IMR-90 (cell line): ENCODE measurements at regions of chr1 and their contacts with region 1.

Region 1: DNA sequence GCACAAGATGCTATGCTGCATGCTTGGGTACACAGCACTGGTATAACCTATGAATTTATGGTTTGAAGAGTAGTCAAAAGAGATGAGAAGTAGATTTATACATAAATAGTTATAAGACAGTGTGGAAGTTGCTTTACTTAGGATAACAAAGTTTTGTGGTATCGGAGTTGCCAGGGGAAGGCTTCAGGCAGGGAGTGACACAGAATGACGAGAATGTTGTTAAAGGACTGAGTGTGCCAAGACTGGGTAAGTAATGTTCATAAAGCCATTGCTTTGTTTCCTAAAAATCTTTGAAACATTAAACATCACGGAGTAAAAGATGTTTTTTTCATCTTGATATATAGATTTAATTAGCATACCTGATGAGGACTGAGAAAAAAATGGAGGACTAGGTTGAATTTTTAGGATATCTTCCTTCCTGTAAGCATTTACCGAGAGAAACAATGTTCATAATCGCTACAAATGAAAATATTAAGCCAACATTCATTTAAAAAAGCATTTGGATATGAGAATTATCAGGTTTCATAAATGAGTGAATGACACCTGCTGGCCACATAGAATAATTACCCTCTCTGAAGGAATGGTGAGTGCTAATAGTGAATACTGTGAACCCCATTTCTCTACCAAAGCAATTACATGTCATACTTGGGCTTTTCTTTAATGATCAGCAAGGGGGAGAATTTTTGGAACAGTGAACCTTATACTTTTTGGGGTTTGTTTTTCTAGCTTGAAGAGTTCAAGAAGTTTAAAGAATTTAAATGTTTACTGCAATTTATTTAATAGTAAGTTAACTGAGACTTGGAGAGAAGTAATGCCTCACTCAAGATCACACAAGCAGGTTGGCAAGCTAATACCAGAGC is 28.4 kb downstream of the EXTL2 start:
- DNase-seq: peak; percentile 70
- ATAC-seq: peak; percentile 56
- H3K4me3 ChIP-seq: no peak overlapping the region
- H3K27ac ChIP-seq: peak overlapping the region; percentile 81
- H3K4me1 ChIP-seq: peaks cover 12% of the 10 kb centered on the region
- H3K27me3 ChIP-seq: no peaks in the 10 kb centered on the region
- CTCF ChIP-seq: peak; percentile 65
- POLR2A ChIP-seq: no peak
- RAD21 ChIP-seq: peak; percentile 72

Region 2: DNA sequence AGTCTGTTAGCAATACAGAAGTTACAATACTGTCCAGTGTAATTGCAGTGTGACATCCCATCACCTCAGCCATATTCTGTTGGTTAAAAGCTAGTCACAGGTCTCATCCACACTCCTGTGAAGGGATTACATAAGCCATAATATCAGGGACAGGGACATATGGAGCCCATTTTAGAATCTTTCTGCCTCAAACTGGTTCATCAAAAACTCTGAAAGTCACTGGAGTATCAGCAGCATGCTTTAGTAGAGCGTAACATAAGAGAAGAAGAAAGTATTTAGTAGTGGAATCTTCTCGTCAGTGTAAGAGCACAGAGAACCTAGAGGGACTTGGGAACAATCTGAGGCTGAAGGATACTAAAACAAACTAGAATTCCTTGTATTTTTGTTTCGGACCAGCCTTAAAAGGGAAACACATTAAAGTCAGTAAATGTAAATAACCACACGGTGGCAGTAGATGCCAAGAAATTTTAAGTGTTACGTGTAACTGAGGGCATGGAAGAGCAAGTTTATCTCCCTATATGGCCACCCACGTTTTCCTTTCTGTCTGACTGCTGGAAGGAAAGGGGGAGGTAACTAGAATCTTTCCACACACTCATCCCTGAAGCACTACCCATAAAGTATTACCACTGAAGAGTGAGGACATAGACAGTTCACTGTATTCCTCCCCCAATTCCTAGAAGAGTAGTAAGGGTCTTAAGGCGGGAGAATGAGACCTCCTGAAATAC is 1057.7 kb before region 1 on chr1:
- CTCF ChIA-PET with region 1: no interaction called
- POLR2A ChIA-PET with region 1: no interaction called
- dilution Hi-C with region 1: no loop called
- in situ Hi-C with region 1: loop called (anchors 10 kb)
- intact Hi-C with region 1: loop called (anchors 2 kb)
- DNase-seq: peak; percentile 96
- ATAC-seq: peak; percentile 97
- H3K4me3 ChIP-seq: peak overlapping the region; percentile 7; the same call in 1 of the 2 replicates
- H3K27ac ChIP-seq: no peak overlapping the region
- H3K4me1 ChIP-seq: no peaks in the 10 kb centered on the region; the same call in 1 of the 2 replicates
- H3K27me3 ChIP-seq: peaks cover 18% of the 10 kb centered on the region
- CTCF ChIP-seq: peak; percentile 84
- POLR2A ChIP-seq: no peak
- RAD21 ChIP-seq: peak; percentile 88

Region 3: DNA sequence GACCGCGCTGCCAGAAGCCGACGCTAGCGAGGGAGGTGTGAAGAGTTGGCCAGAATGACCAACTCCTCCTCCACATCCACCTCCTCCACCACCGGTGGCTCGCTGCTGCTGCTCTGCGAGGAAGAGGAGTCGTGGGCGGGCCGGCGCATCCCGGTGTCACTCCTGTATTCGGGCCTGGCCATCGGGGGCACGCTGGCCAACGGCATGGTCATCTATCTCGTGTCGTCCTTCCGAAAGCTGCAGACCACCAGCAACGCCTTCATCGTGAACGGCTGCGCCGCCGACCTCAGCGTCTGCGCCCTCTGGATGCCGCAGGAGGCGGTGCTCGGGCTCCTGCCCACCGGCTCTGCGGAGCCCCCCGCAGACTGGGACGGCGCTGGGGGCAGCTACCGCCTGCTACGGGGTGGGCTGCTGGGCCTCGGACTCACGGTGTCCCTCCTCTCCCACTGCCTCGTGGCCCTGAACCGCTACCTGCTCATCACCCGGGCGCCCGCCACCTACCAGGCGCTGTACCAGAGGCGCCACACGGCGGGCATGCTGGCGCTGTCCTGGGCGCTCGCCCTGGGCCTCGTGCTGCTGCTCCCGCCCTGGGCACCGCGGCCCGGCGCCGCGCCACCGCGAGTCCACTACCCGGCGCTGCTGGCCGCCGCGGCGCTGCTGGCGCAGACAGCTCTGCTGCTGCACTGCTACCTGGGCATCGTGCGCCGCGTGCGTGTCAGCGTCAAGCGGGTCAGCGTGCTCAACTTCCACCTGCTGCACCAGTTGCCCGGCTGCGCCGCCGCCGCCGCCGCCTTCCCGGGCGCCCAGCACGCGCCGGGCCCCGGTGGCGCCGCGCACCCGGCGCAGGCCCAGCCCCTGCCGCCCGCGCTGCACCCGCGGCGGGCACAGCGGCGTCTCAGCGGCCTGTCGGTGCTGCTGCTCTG is 327.1 kb before region 1 on chr1:
- CTCF ChIA-PET with region 1: interaction called, 3 read pairs
- POLR2A ChIA-PET with region 1: no interaction called
- dilution Hi-C with region 1: no loop called
- in situ Hi-C with region 1: no loop called
- intact Hi-C with region 1: loop called (anchors 5 kb)
- DNase-seq: peak; percentile 3
- ATAC-seq: peak; percentile 79
- H3K4me3 ChIP-seq: peak overlapping the region; percentile 30
- H3K27ac ChIP-seq: no peak overlapping the region
- H3K4me1 ChIP-seq: peaks cover 4% of the 10 kb centered on the region; the same call in 1 of the 2 replicates
- H3K27me3 ChIP-seq: peaks cover 54% of the 10 kb centered on the region
- CTCF ChIP-seq: no peak; the same call in 1 of the 2 replicates
- POLR2A ChIP-seq: no peak
- RAD21 ChIP-seq: no peak

Region 4: GRCh38 chr1:100622037-100622436 is 244.2 kb before region 1 on chr1:
- CTCF ChIA-PET with region 1: interaction called, 3 read pairs
- POLR2A ChIA-PET with region 1: no interaction called
- dilution Hi-C with region 1: no loop called
- in situ Hi-C with region 1: no loop called
- intact Hi-C with region 1: loop called (anchors 5 kb)
- DNase-seq: peak; percentile 99
- ATAC-seq: peak; percentile 73
- H3K4me3 ChIP-seq: no peak overlapping the region
- H3K27ac ChIP-seq: peak overlapping the region; percentile 93; the same call in 1 of the 2 replicates
- H3K4me1 ChIP-seq: peaks cover 21% of the 10 kb centered on the region
- H3K27me3 ChIP-seq: no peaks in the 10 kb centered on the region
- CTCF ChIP-seq: no peak
- POLR2A ChIP-seq: no peak
- RAD21 ChIP-seq: peak; percentile 20

Region 5: DNA sequence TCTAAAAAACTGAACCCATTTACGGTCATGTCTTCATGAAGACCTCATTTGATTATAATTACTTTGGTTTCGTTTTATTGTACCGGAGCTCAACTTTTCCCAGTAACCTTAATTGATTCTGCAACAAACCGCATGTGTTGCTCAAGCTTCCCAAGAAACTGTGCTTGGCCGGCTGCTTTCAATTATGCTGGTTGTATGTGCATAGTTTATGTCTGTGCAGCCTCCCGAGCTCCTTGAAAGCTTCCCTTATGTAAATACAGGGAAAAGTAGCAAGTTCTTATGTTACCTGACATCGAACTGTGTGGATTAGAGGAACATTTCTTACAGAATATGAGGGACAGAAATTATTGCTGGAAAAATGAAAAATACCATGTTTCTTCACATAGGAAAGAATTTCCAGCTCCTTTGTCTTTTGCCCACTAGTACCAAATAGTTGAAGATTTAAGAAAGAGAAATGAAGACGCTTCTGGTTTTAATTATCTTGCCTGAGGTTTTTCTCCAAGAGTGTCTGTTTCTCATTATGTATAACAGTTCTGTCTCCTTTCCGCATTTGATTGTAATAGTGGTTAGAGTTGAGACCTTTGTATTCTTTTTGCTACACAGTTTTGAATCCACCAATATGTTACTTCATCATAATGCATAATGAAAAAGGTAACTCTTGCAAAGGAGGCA is 144.6 kb before region 1 on chr1:
- CTCF ChIA-PET with region 1: no interaction called
- POLR2A ChIA-PET with region 1: no interaction called
- dilution Hi-C with region 1: no loop called
- in situ Hi-C with region 1: no loop called
- intact Hi-C with region 1: loop called (anchors 1 kb)
- DNase-seq: peak; percentile 96
- ATAC-seq: peak; percentile 78
- H3K4me3 ChIP-seq: peak overlapping the region; percentile 51
- H3K27ac ChIP-seq: peak overlapping the region; percentile 96; the same call in 1 of the 2 replicates
- H3K4me1 ChIP-seq: peaks cover 4% of the 10 kb centered on the region
- H3K27me3 ChIP-seq: no peaks in the 10 kb centered on the region
- CTCF ChIP-seq: no peak
- POLR2A ChIP-seq: no peak
- RAD21 ChIP-seq: peak; percentile 27; the same call in 1 of the 2 replicates

Region 6: GRCh38 chr1:101371259-101371658 is 505.0 kb after region 1 on chr1:
- CTCF ChIA-PET with region 1: no interaction called
- POLR2A ChIA-PET with region 1: no interaction called
- dilution Hi-C with region 1: no loop called
- in situ Hi-C with region 1: no loop called
- intact Hi-C with region 1: no loop called
- DNase-seq: peak; percentile 87
- ATAC-seq: peak; percentile 79
- H3K4me3 ChIP-seq: no peak overlapping the region
- H3K27ac ChIP-seq: no peak overlapping the region
- H3K4me1 ChIP-seq: peaks cover 9% of the 10 kb centered on the region
- H3K27me3 ChIP-seq: peaks cover 3% of the 10 kb centered on the region
- CTCF ChIP-seq: no peak
- POLR2A ChIP-seq: no peak
- RAD21 ChIP-seq: no peak